Lower lobe of right lung (tissue), 2 donors: ENCODE measurements at regions of chr4 and their contacts with region 1.

Region 1: GRCh38 chr4:112327965-112328733 is 31.0 kb downstream of the ALPK1 start:
- DNase-seq: no peak
- ATAC-seq: no peak
- H3K4me3 ChIP-seq: no peak overlapping the region
- H3K27ac ChIP-seq: no peak overlapping the region
- H3K4me1 ChIP-seq: no peaks in the 10 kb centered on the region
- H3K27me3 ChIP-seq: no peaks in the 10 kb centered on the region
- CTCF ChIP-seq: peak; percentile 37

Region 2: DNA sequence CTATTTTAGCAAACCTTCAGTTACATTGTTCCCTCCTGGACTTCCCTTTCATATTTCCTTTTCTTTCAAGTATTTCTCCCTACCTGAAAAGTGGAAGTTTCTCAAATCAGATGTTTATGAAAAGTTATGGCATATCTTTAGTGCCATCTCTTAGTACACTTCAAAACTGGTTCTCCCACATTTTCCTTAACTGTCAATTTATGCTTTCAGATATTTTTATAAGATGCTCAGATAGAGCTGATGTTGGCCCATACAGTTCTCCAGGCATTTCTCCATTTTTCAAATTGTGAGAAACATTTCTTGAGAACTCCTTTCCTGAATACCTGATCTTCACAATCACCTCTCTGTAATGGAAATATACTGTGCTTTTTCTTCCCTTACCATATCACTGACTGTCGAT is 129.1 kb before region 1 on chr4:
- intact Hi-C with region 1: no loop called
- DNase-seq: no peak
- ATAC-seq: no peak
- H3K4me3 ChIP-seq: no peak overlapping the region
- H3K27ac ChIP-seq: no peak overlapping the region
- H3K4me1 ChIP-seq: no peaks in the 10 kb centered on the region
- H3K27me3 ChIP-seq: no peaks in the 10 kb centered on the region
- CTCF ChIP-seq: no peak

Region 3: GRCh38 chr4:112523764-112524505 is 195.8 kb after region 1 on chr4:
- intact Hi-C with region 1: loop called (anchors 10 kb)
- DNase-seq: peak; percentile 70
- ATAC-seq: peak; percentile 91 to 92
- H3K4me3 ChIP-seq: peak overlapping the region; percentile 50
- H3K27ac ChIP-seq: no peak overlapping the region
- H3K4me1 ChIP-seq: peaks cover 18% of the 10 kb centered on the region
- H3K27me3 ChIP-seq: peaks cover 73% of the 10 kb centered on the region
- CTCF ChIP-seq: peak; percentile 76